CD4-positive, alpha-beta T cell (primary cell): ENCODE measurements at regions of chr17 and their contacts with region 1.

Region 1: DNA sequence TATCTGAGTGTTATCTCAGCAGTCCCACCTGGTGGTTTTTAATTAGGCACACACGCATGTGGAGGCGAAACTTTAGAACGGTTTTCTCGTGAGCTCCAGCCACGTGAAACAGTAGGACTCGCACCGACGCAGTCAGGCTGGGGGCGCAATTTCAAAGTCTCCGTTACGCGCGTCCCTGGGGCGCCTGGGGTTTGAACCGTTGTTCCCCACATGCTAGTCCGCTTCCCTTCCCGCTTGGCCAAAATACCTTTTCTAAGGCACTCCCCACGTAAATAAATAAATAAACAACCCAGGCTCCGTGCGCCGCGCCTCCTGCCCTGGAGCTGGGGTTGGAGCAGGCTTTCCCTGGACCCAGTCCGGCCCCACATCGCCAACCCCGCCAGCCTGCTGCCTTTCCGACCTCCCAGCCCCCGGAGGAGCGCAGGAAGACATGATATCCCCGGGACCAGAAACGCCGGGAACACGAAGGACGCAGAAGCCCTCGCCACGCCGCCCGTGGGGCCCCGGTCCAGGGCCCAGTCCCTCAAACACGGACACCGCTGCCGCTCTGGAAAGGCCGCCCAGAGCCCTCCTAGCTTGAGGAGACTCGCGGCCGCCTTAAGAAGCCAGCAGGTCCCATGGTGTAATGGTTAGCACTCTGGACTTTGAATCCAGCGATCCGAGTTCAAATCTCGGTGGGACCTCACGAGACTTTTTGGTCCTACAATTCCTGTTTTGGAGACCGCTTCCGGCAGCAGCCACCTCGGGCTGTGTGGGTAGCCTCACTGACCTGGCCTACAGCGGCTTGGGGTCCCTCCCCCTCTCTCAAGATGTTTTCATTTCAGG is 18.2 kb downstream of the GNGT2 start:
- DNase-seq: peak; percentile 84 to 98 (median 92)
- ATAC-seq: peak; percentile 52
- H3K4me3 ChIP-seq: peak overlapping the region; percentile 81
- H3K4me3 Mint-ChIP-seq: peak overlapping the region; percentile 93
- H3K27ac ChIP-seq: peak overlapping the region; percentile 92 to 97
- H3K27ac Mint-ChIP-seq: peak overlapping the region; percentile 98
- H3K4me1 ChIP-seq: peaks cover 25% of the 10 kb centered on the region
- H3K4me1 Mint-ChIP-seq: peaks cover 33% of the 10 kb centered on the region
- H3K27me3 ChIP-seq: no peaks in the 10 kb centered on the region
- H3K27me3 Mint-ChIP-seq: peaks cover 10% of the 10 kb centered on the region
- CTCF ChIP-seq: peak; percentile 56

Region 2: GRCh38 chr17:48944519-48945260 is 247.4 kb before region 1 on chr17 and contains the start of gene SNF8:
- CTCF ChIA-PET with region 1: no interaction called
- POLR2A ChIA-PET with region 1: interaction called, 6 read pairs
- intact Hi-C with region 1: loop called in 1 of 2 experiments (anchors 5 kb)
- DNase-seq: peak; percentile 81 to 94 (median 90)
- ATAC-seq: peak; percentile 93
- H3K4me3 ChIP-seq: peak within 1 kb of the TSS; percentile 99
- H3K4me3 Mint-ChIP-seq: peak within 1 kb of the TSS; percentile 99
- H3K27ac ChIP-seq: peak within 1 kb of the TSS; percentile 81 to 85
- H3K27ac Mint-ChIP-seq: peak within 1 kb of the TSS; percentile 95
- H3K4me1 ChIP-seq: peaks cover 31% of the 10 kb centered on the region
- H3K4me1 Mint-ChIP-seq: peaks cover 14% of the 10 kb centered on the region
- H3K27me3 ChIP-seq: no peaks in the 10 kb centered on the region
- H3K27me3 Mint-ChIP-seq: no peaks in the 10 kb centered on the region
- CTCF ChIP-seq: no peak
- total RNA-seq, gene SNF8: 53.8 to 57.4 TPM

Region 3: GRCh38 chr17:49204516-49204915 is 12.4 kb after region 1 on chr17:
- CTCF ChIA-PET with region 1: interaction called, 6 read pairs
- POLR2A ChIA-PET with region 1: interaction called, 53 read pairs
- intact Hi-C with region 1: no loop called
- DNase-seq: no peak
- ATAC-seq: no peak
- H3K4me3 ChIP-seq: no peak overlapping the region
- H3K4me3 Mint-ChIP-seq: no peak overlapping the region
- H3K27ac ChIP-seq: no peak overlapping the region
- H3K27ac Mint-ChIP-seq: no peak overlapping the region
- H3K4me1 ChIP-seq: peaks cover 26% of the 10 kb centered on the region
- H3K4me1 Mint-ChIP-seq: peaks cover 16% of the 10 kb centered on the region
- H3K27me3 ChIP-seq: no peaks in the 10 kb centered on the region
- H3K27me3 Mint-ChIP-seq: no peaks in the 10 kb centered on the region
- CTCF ChIP-seq: no peak

Region 4: DNA sequence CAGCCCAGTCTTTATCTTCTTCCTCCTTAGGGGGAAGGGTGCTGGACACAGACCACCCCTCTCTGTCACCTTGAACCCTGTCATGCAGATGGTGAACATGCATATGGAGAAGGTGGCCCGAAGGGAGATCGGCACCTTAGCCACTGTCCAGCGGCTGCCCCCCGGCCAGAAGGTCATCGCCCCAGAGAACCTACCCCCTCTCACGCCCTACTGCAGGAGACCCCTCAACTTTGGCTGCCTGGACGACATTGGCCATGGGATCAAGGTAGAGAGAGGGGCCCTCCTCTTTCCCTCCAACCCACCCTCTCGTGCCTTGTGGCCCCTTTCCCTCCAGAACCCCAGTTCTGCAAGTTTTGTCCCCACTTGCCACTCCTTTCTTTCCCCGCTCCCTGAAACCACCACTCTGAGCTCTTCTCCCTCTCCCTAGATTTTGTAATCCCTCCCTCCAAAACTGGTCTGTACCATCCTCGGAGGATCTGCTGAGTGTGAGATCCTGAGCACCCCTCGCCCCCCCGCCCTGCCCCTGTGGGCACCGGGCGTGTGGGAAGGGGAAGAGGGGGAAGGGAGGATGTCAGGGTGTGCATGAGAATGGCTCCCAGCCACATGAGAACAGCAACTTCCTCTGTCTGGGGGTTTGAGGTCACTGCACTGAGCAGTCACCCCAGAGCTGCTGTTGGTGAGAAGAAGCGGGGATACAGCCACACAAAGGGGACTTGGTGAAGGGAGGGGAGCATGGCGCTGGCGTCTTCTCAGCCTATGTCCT is 25.7 kb after region 1 on chr17:
- CTCF ChIA-PET with region 1: interaction called, 14 read pairs
- POLR2A ChIA-PET with region 1: interaction called, 27 read pairs
- intact Hi-C with region 1: loop called in 1 of 2 experiments (anchors 1 kb)
- DNase-seq: peak; percentile 44 to 93 (median 62)
- ATAC-seq: peak; percentile 84
- H3K4me3 ChIP-seq: peak overlapping the region; percentile 32
- H3K4me3 Mint-ChIP-seq: peak overlapping the region; percentile 85
- H3K27ac ChIP-seq: peak overlapping the region; percentile 63 to 64
- H3K27ac Mint-ChIP-seq: peak overlapping the region; percentile 96
- H3K4me1 ChIP-seq: peaks cover 78% of the 10 kb centered on the region
- H3K4me1 Mint-ChIP-seq: peaks cover 64% of the 10 kb centered on the region
- H3K27me3 ChIP-seq: no peaks in the 10 kb centered on the region
- H3K27me3 Mint-ChIP-seq: no peaks in the 10 kb centered on the region
- CTCF ChIP-seq: no peak

Region 5: GRCh38 chr17:49230636-49231562 is 38.8 kb after region 1 on chr17 and contains the start of gene PHOSPHO1:
- CTCF ChIA-PET with region 1: interaction called, 14 read pairs
- POLR2A ChIA-PET with region 1: interaction called, 64 read pairs
- intact Hi-C with region 1: loop called in 1 of 2 experiments (anchors 2 kb)
- DNase-seq: peak; percentile 70 to 94 (median 82)
- ATAC-seq: peak; percentile 93
- H3K4me3 ChIP-seq: peak within 1 kb of the TSS; percentile 78
- H3K4me3 Mint-ChIP-seq: peak within 1 kb of the TSS; percentile 84
- H3K27ac ChIP-seq: no peak within 1 kb of the TSS
- H3K27ac Mint-ChIP-seq: peak within 1 kb of the TSS; percentile 19
- H3K4me1 ChIP-seq: peaks cover 28% of the 10 kb centered on the region
- H3K4me1 Mint-ChIP-seq: peaks cover 11% of the 10 kb centered on the region
- H3K27me3 ChIP-seq: peaks cover 12 to 16% of the 10 kb centered on the region in 2 experiments
- H3K27me3 Mint-ChIP-seq: peaks cover 16% of the 10 kb centered on the region
- CTCF ChIP-seq: no peak
- total RNA-seq, gene PHOSPHO1: not detected

Region 6: DNA sequence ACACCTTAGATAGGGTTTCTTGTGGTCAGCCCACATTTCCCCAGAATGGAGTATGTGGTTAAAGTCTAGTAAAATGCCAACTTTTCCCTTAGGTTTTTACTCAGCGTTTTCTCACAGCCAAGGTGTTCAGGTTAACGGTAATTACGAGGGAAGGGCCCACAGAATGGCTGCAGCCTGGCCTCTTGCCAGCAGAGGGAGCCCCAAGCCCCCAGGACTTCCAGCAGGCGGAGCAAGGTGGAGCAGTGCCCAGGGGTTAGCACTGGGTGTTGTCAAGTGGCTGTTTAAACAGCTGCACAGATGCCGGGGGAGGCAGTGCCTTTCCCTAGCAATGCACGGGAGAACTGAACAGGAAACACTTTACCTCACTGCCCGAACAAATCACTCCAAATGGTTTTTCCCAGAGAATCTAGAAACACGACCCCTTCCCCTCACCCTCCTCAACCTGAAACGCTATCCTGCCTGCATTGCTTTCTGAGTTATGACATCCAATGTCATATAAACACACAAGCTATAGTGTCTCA is 215.9 kb after region 1 on chr17:
- CTCF ChIA-PET with region 1: no interaction called
- POLR2A ChIA-PET with region 1: no interaction called
- intact Hi-C with region 1: loop called in 1 of 2 experiments (anchors 10 kb)
- DNase-seq: peak; percentile 71 to 89 (median 81)
- ATAC-seq: peak; percentile 100
- H3K4me3 ChIP-seq: no peak overlapping the region
- H3K4me3 Mint-ChIP-seq: peak overlapping the region; percentile 61
- H3K27ac ChIP-seq: no peak overlapping the region
- H3K27ac Mint-ChIP-seq: no peak overlapping the region
- H3K4me1 ChIP-seq: peaks cover 18% of the 10 kb centered on the region
- H3K4me1 Mint-ChIP-seq: peaks cover 22% of the 10 kb centered on the region
- H3K27me3 ChIP-seq: no peaks in the 10 kb centered on the region
- H3K27me3 Mint-ChIP-seq: no peaks in the 10 kb centered on the region
- CTCF ChIP-seq: peak; percentile 95